ENCODE measurements at regions of chr2 and their contacts with region 1.

Region 1: DNA sequence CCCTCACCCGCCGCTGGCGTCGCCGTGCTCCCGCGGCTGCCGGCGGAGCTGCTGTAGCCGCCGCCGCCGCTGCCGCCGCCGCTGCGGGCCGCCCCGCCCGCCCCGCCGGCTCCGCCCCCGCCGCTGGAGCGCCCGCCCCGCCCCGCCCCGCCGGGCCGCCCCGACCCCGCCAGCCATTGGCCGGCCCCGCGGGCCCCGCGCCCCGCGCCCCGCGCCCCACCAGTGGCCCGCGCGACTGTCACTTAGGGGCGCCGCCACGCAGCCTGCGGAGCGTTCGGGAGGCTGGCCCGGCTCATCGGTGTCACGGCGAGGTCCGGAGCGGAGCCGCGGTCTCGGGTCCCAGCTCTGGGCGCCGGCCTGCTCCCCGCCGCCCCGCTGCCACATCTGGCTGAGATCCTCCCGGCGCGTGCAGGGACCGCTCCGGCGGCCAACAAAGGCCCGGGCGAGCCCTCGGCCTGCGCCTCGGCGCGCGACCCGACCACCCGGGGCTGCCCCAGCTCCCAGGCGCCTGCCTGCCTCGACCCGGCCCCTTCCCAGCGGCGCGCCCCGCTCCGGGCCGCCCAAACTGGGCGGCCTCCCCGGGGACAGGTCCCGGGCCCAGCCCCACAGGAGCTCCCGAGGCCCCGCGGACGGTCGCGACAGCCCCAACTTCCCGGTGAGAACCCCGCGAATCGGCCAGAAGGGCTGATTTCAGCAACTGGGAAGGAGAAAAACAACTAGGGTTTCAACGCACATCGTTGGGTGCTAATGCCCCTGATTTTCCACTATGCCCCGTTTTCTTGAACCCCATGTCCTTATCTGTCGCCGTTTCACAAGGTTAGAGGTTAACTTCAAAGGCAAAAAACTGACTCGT is at the start of gene MGAT4A:
- DNase-seq: peak; percentile 85
- H3K4me3 Mint-ChIP-seq: peak within 1 kb of the TSS; percentile 90
- H3K27ac Mint-ChIP-seq: peak within 1 kb of the TSS; percentile 90
- H3K4me1 Mint-ChIP-seq: peaks cover 61% of the 10 kb centered on the region
- H3K27me3 Mint-ChIP-seq: no peaks in the 10 kb centered on the region
- total RNA-seq, gene MGAT4A: 71.9 to 76.7 TPM

Region 2: GRCh38 chr2:98465456-98466226 is 265.6 kb before region 1 on chr2:
- CTCF ChIA-PET with region 1: no interaction called
- POLR2A ChIA-PET with region 1: no interaction called
- intact Hi-C with region 1: loop called (anchors 10 kb)
- DNase-seq: peak; percentile 79
- H3K4me3 Mint-ChIP-seq: peak overlapping the region; percentile 68
- H3K27ac Mint-ChIP-seq: peak overlapping the region; percentile 95
- H3K4me1 Mint-ChIP-seq: peaks cover 85% of the 10 kb centered on the region
- H3K27me3 Mint-ChIP-seq: no peaks in the 10 kb centered on the region

Region 3: DNA sequence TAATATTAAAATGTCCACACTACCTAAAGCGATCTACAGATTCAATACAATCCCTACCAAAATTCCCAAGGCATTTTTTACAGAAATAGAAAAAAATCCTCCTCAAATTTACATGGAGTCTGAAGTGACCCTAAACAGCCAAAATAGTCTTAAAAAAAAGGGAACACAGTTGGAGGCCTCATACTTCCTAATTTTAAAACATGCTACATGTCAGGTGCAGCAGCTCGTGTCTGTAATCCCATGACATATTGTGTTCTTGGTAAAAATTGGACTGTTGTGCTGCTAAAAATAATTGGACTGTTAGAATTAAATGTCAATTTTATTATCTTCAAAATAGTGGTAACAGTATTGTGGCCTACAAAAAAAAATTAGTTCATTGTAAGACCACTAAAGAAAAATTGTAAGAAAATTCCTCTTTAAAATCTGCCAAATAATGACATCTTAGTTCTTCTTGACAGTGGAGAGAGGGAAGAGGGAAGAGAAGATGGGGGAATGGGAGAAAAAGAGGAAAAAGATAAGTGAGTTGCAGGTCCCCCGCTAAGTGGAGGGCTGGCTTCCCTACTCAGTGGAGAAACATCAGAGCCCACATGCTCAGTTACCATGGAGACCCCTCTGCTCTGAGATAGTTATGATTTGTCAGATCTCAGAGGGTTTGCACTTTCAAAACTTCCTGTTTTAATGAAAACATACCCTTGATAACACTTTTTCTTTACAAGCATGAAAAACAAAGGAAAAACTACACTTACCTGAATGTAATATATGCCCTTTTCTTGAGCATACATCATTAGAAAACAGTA is 76.4 kb before region 1 on chr2:
- CTCF ChIA-PET with region 1: interaction called, 34 read pairs
- POLR2A ChIA-PET with region 1: interaction called, 27 read pairs
- intact Hi-C with region 1: loop called (anchors 2 kb)
- DNase-seq: no peak
- H3K4me3 Mint-ChIP-seq: no peak overlapping the region
- H3K27ac Mint-ChIP-seq: peak overlapping the region; percentile 67
- H3K4me1 Mint-ChIP-seq: peaks cover 76% of the 10 kb centered on the region
- H3K27me3 Mint-ChIP-seq: no peaks in the 10 kb centered on the region

Region 4: DNA sequence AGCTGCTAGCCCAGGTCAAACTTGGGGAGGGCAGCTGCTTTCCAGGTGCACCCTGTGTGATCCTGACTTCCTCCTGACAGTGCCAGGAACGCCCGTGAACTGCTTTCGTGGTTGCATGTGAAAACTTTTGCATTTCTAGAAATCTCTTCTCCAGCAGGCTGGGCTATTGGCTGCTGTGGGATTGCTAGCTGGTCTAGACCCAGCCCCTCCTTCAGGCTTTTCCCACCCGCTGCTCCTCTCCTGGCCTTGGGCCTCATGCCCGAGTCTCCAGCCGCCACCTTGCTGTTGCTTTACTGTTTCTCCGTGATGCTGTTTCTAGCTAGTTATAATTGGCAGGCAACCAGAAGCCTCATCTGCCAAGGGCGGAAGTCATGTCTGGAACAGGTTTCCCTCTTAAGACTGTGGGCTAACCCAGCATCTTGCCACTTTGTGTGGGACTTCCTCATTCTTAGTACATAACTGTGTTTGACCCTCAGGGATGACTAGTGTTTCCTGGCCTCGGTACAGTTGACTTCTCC is 26.7 kb after region 1 on chr2:
- CTCF ChIA-PET with region 1: interaction called, 12 read pairs
- POLR2A ChIA-PET with region 1: interaction called, 8 read pairs
- intact Hi-C with region 1: loop called (anchors 1 kb)
- DNase-seq: peak; percentile 69
- H3K4me3 Mint-ChIP-seq: peak overlapping the region; percentile 51
- H3K27ac Mint-ChIP-seq: peak overlapping the region; percentile 86
- H3K4me1 Mint-ChIP-seq: peaks cover 51% of the 10 kb centered on the region
- H3K27me3 Mint-ChIP-seq: no peaks in the 10 kb centered on the region

Region 5: DNA sequence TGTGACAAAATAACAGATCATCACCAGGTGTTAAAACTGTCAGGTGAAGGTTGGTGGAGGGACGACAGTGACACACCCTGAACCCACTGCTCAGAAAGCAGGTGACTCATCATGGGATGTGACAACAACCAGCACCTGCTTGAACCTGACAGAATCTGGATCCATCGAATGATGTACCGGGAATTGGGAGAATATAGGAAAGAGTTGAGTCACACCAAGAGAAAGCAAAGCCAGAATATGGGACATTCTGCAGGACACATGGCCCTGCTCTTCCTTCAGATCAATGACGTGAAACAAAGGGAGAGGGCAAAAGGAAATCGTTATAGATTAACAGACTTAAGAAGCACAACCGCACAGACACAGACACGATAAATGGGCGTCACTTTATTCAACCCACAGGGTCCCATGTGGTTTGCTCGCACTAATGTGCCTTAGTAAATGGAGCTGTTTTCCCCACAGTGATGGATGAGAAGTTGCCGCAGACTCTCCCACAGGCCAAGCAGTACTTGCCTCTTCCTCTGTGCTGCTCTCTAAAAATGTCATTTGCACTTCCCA is 104.6 kb after region 1 on chr2:
- CTCF ChIA-PET with region 1: interaction called, 15 read pairs
- POLR2A ChIA-PET with region 1: no interaction called
- intact Hi-C with region 1: loop called (anchors 5 kb)
- DNase-seq: peak; percentile 56
- H3K4me3 Mint-ChIP-seq: peak overlapping the region; percentile 6
- H3K27ac Mint-ChIP-seq: peak overlapping the region; percentile 21
- H3K4me1 Mint-ChIP-seq: peaks cover 35% of the 10 kb centered on the region
- H3K27me3 Mint-ChIP-seq: no peaks in the 10 kb centered on the region

Region 6: GRCh38 chr2:99337113-99338028 is 606.1 kb after region 1 on chr2 and contains the start of gene EIF5B:
- CTCF ChIA-PET with region 1: no interaction called
- POLR2A ChIA-PET with region 1: no interaction called
- intact Hi-C with region 1: loop called (anchors 5 kb)
- DNase-seq: peak; percentile 95
- H3K4me3 Mint-ChIP-seq: no peak within 1 kb of the TSS
- H3K27ac Mint-ChIP-seq: no peak within 1 kb of the TSS
- H3K4me1 Mint-ChIP-seq: peaks cover 55% of the 10 kb centered on the region
- H3K27me3 Mint-ChIP-seq: no peaks in the 10 kb centered on the region
- total RNA-seq, gene EIF5B: 69.7 to 72.0 TPM